ENCODE measurements at regions of chr5 and their contacts with region 1.

Region 1: GRCh38 chr5:15105796-15106393 is 234.3 kb upstream of the ANKH start:
- DNase-seq: peak; percentile 59
- ATAC-seq: peak; percentile 77
- H3K4me3 Mint-ChIP-seq: no peak overlapping the region
- H3K27ac Mint-ChIP-seq: no peak overlapping the region
- H3K4me1 Mint-ChIP-seq: peaks cover 3% of the 10 kb centered on the region
- H3K27me3 Mint-ChIP-seq: peaks cover under 1% of the 10 kb centered on the region

Region 2: GRCh38 chr5:15013654-15014463 is 92.0 kb before region 1 on chr5:
- CTCF ChIA-PET with region 1: no interaction called
- POLR2A ChIA-PET with region 1: no interaction called
- intact Hi-C with region 1: no loop called
- DNase-seq: no peak
- ATAC-seq: no peak
- H3K4me3 Mint-ChIP-seq: no peak overlapping the region
- H3K27ac Mint-ChIP-seq: no peak overlapping the region
- H3K4me1 Mint-ChIP-seq: no peaks in the 10 kb centered on the region
- H3K27me3 Mint-ChIP-seq: no peaks in the 10 kb centered on the region

Region 3: DNA sequence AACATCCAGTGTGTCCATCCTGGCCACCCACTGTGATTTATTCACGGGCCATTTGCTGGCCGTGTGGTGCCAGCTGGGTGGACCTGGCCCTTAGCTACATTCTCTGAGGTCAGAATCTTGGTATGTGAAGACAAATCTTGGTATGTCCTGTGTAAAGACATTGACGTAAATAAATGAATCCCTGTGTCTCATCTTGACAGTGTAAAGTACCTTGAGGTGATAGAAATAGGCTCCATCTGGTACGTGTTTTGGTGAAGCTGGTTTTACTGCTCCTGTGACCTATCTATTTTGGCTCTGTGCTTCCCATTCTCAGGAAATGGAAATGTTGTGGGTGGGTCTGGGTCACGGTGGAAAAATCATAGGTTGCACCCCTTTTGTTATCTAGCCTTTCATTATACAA is 11.1 kb after region 1 on chr5:
- CTCF ChIA-PET with region 1: interaction called, 12 read pairs
- POLR2A ChIA-PET with region 1: no interaction called
- intact Hi-C with region 1: no loop called
- DNase-seq: no peak
- ATAC-seq: no peak
- H3K4me3 Mint-ChIP-seq: no peak overlapping the region
- H3K27ac Mint-ChIP-seq: no peak overlapping the region
- H3K4me1 Mint-ChIP-seq: no peaks in the 10 kb centered on the region
- H3K27me3 Mint-ChIP-seq: no peaks in the 10 kb centered on the region

Region 4: DNA sequence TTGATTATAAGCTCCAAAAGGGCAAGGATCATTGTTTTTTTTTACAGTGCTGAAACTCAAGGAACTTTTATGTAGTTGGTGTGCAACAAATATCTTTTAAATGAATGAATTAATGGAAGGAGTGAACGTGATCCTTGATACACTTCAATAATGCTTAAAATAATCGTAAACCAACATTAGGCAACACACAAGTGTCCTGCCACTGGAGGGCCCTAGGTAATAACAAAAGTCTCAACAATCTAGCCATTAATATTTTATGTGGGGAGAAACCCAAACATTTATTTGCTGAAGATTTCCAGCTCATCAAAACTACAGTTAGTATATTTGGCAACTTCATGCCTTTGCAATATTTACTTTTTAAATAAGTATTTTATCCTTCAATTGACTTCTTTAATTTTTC is 85.1 kb after region 1 on chr5:
- CTCF ChIA-PET with region 1: no interaction called
- POLR2A ChIA-PET with region 1: no interaction called
- intact Hi-C with region 1: no loop called
- DNase-seq: no peak
- ATAC-seq: no peak
- H3K4me3 Mint-ChIP-seq: no peak overlapping the region
- H3K27ac Mint-ChIP-seq: no peak overlapping the region
- H3K4me1 Mint-ChIP-seq: no peaks in the 10 kb centered on the region
- H3K27me3 Mint-ChIP-seq: no peaks in the 10 kb centered on the region

Region 5: DNA sequence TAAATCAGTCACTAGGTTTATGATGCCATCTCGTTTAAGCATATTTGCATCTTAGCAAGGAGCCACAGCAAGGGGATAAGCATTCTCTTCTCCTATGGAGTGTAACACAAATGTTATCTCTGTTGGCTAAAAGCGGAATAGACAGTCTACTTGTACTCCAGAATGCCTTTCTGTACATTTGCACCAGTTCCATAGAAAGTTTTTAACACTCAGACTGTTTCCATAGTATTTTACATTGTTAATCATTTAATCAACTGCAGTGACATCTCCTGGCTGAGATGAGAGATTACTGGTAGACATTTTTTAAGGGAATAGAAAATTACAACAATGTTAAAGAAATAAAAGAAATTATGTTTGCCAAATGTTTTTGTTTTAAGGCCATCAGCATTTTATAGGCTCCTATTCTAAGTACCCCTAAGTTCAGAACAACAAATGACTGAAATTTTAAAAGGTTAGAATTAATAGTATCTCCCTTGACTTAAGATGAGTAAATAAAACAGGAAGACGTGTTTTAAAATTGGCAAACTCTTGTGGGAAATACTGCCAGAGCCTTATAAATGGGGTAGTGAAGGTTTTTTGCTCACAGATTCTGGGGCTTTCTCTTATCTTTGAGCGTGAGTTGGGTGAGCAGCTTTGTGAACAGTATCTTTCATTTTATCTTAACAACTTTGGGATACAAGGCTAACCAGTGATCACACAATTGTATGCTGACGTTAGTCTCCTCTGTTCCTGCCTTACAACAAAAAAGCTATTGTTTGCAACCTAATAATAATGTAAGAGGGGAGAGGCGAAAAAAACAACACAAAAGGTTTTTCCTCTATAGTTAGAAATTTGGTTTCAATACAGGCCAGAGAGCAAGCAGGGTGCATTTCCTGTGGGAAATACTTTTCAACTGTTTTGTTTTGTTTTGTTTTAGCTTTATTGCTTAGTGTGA is 688.4 kb after region 1 on chr5:
- CTCF ChIA-PET with region 1: no interaction called
- POLR2A ChIA-PET with region 1: no interaction called
- intact Hi-C with region 1: loop called in 1 of 2 experiments (anchors 10 kb)
- DNase-seq: no peak
- ATAC-seq: no peak
- H3K4me3 Mint-ChIP-seq: no peak overlapping the region
- H3K27ac Mint-ChIP-seq: no peak overlapping the region
- H3K4me1 Mint-ChIP-seq: no peaks in the 10 kb centered on the region
- H3K27me3 Mint-ChIP-seq: no peaks in the 10 kb centered on the region

Region 6: GRCh38 chr5:15821506-15821905 is 715.6 kb after region 1 on chr5:
- CTCF ChIA-PET with region 1: interaction called, 4 read pairs
- POLR2A ChIA-PET with region 1: no interaction called
- intact Hi-C with region 1: loop called in 1 of 2 experiments (anchors 1 kb)
- DNase-seq: no peak
- ATAC-seq: no peak
- H3K4me3 Mint-ChIP-seq: no peak overlapping the region
- H3K27ac Mint-ChIP-seq: no peak overlapping the region
- H3K4me1 Mint-ChIP-seq: no peaks in the 10 kb centered on the region
- H3K27me3 Mint-ChIP-seq: no peaks in the 10 kb centered on the region

Region 7: GRCh38 chr5:15995341-15996052 is 889.6 kb after region 1 on chr5:
- CTCF ChIA-PET with region 1: no interaction called
- POLR2A ChIA-PET with region 1: no interaction called
- intact Hi-C with region 1: loop called in 1 of 2 experiments (anchors 2 kb)
- DNase-seq: no peak
- ATAC-seq: no peak
- H3K4me3 Mint-ChIP-seq: no peak overlapping the region
- H3K27ac Mint-ChIP-seq: no peak overlapping the region
- H3K4me1 Mint-ChIP-seq: no peaks in the 10 kb centered on the region
- H3K27me3 Mint-ChIP-seq: no peaks in the 10 kb centered on the region